Activated CD4-positive, alpha-beta memory T cell treated with anti-CD3 and anti-CD28 coated beads, Interleukin-2, amount 10 ng/mL, durations not matched to agents 7 days and 5 days (primary cell): ENCODE measurements at regions of chr1 and their contacts with region 1.

Region 1: DNA sequence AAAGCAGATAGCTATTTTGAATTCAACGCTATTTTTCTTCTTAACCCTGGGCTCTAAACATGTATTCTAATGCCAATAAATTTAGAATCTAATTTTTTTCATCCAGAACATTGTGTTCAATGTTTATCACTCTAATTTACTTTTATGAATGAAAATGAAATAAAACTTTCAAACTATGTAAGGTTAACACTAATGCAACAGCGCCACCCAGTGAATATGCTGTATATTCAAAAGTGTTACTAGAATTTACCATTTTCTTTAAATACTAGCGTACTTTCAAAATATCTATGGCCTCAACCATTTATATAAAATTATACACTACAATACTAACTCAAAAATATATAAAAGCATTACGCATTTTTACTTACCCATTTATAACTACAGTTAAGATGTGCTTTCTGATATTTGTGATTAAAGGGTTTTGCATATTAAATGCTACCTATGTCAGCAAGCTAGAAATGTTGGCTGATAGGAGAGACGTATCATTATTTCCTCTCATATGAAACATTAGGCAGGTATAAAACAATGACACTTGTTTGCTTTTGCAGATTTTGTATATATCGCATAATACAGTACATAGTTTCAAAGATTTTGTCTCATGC is 5.9 kb upstream of the NUF2 start:
- DNase-seq: peak; percentile 41
- H3K4me3 Mint-ChIP-seq: no peak overlapping the region
- H3K27ac Mint-ChIP-seq: no peak overlapping the region
- H3K4me1 Mint-ChIP-seq: peaks cover 9% of the 10 kb centered on the region
- H3K27me3 Mint-ChIP-seq: no peaks in the 10 kb centered on the region

Region 2: DNA sequence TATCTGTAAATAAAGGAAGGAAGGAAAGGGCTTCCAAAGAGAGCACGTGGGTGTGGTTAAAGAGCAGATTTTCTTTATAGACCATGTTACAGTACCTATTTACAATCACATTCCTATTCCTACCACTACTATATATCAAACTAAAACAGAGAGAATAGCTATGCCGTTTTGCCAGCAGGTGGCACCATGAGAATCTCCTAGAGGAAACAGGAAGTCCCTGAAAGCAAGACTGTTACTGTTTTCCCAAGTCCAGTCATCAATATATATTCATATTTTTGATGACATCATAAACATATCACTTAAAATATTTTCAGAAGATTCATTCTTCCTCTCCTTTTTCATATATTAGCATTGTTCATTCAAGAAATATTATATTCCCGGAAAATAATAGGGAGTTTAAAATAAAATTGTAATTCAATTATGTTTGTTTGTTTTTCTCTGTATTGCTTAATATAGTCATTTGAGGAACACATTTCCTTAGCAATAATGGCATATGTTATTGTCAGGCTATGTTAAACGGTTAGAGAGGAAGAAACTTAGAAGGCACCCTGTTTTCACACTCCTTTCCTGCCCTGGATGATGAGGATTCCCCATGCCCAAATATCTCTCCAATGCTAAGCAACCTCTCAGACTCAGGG is 461.5 kb before region 1 on chr1:
- CTCF ChIA-PET with region 1: interaction called, 31 read pairs
- POLR2A ChIA-PET with region 1: no interaction called
- DNase-seq: peak; percentile 56
- H3K4me3 Mint-ChIP-seq: no peak overlapping the region
- H3K27ac Mint-ChIP-seq: no peak overlapping the region
- H3K4me1 Mint-ChIP-seq: no peaks in the 10 kb centered on the region
- H3K27me3 Mint-ChIP-seq: peaks cover 8% of the 10 kb centered on the region

Region 3: GRCh38 chr1:163071405-163072255 is 244.2 kb before region 1 on chr1:
- CTCF ChIA-PET with region 1: interaction called, 23 read pairs
- POLR2A ChIA-PET with region 1: no interaction called
- DNase-seq: peak; percentile 48
- H3K4me3 Mint-ChIP-seq: no peak overlapping the region
- H3K27ac Mint-ChIP-seq: no peak overlapping the region
- H3K4me1 Mint-ChIP-seq: no peaks in the 10 kb centered on the region
- H3K27me3 Mint-ChIP-seq: peaks cover 43% of the 10 kb centered on the region